ENCODE measurements at regions of chr12 and their contacts with region 1.

Region 1: DNA sequence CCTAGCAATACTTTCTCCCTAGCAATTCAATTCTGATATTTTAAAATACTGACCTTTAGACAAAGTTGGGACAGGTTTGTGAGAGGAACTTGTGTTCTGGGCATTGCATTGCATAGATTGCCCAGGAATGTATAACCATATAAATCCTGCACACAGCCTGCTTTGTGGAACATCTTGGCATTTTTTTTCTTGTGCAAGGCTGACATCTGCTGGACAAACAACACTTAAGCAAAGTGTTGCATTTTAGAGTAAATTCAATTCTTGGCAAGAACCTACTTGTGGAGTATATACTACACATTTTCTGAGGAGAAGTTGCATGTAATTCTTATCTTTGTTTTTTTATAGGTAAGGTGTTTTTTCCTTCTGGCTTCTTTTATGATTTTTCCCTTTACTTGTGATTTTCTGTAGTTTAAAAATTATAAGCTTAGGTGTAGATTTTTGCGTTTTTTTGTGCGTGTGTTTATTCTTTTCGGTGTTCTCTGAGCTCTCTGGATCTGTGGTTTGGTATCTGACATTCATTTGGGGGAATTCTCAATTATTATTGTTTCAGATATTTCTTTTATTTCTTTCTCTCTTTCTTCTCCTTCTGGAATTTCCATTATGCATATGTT is 26.4 kb downstream of the TESPA1 start:
- DNase-seq: peak; percentile 49
- H3K4me3 Mint-ChIP-seq: no peak overlapping the region
- H3K27ac Mint-ChIP-seq: no peak overlapping the region
- H3K4me1 Mint-ChIP-seq: peaks cover 73% of the 10 kb centered on the region
- H3K27me3 Mint-ChIP-seq: no peaks in the 10 kb centered on the region

Region 2: DNA sequence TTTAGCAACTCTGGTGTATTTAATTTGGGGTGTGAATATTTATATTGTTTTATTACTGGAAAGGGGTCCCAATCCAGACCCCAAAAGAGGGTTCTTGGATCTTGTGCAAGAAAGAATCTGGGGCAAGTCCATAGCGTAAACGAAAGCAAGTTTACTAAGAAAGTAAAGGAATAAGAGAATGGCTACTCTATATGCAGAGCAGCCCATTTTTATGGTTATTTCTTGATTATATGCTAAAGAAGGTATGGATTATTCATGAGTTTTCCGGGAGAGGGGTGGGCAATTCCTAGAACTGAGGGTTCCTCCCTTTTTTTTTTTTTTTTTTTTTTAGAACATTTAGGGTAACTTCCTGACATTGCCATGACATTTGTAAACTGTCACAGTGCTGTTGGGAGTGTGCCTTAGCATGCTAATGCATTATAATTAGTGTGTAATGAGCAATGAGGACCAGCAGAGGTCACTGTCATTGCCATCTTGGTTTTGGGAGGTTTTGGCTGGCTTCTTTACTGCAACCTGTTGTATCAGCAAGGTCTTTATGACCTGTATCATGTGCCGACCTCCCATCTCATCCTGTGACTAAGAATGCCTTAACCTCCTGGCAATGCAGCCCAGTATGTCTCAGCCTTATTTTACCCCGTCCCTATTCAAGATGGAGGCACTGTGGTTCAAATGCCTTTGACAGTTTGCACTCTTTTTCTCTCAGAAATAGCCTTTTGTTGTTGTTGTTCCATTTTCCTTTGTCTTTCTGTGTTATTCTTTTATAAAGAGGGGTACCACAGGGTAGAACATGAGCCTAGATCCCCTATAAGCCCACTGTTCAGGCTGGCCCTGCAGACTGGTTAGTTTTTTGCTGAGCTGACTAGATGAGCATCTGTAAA is 234.5 kb before region 1 on chr12:
- CTCF ChIA-PET with region 1: interaction called, 15 read pairs
- POLR2A ChIA-PET with region 1: no interaction called
- DNase-seq: peak; percentile 42
- H3K4me3 Mint-ChIP-seq: no peak overlapping the region
- H3K27ac Mint-ChIP-seq: no peak overlapping the region
- H3K4me1 Mint-ChIP-seq: peaks cover 9% of the 10 kb centered on the region
- H3K27me3 Mint-ChIP-seq: peaks cover 25% of the 10 kb centered on the region

Region 3: DNA sequence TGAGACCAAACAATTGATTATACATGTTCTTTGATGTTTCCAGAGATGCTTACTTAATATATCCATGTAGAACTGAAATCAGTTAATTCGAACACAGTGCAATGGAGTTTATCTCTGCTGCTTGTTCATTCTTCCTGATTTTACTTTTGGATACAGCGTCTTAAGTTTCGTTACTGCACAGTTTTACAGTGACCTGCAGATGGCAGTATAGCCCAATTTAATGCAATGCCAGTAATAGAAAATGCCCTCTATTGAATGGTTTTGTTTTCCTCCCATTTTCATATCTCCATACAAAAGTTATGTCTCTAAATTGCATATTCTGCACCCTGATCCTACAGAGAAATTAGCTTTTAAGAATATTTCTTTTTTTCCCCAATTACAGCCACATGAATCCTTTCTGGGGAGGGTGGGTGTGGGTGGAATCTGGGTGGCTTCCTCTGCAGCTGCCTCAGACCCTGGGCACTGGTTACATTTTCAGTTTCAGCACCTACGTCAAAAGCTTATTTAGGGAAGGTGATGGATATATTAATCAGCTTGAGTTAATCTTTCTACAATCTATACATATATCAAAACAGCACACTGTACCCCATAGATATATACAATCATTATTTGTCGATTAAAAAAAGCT is 208.8 kb before region 1 on chr12:
- CTCF ChIA-PET with region 1: interaction called, 73 read pairs
- POLR2A ChIA-PET with region 1: interaction called, 3 read pairs
- DNase-seq: peak; percentile 39
- H3K4me3 Mint-ChIP-seq: peak overlapping the region; percentile 36
- H3K27ac Mint-ChIP-seq: no peak overlapping the region
- H3K4me1 Mint-ChIP-seq: peaks cover 19% of the 10 kb centered on the region
- H3K27me3 Mint-ChIP-seq: no peaks in the 10 kb centered on the region

Region 4: GRCh38 chr12:54759751-54760150 is 198.4 kb before region 1 on chr12:
- CTCF ChIA-PET with region 1: interaction called, 17 read pairs
- POLR2A ChIA-PET with region 1: no interaction called
- DNase-seq: peak; percentile 24
- H3K4me3 Mint-ChIP-seq: no peak overlapping the region
- H3K27ac Mint-ChIP-seq: no peak overlapping the region
- H3K4me1 Mint-ChIP-seq: peaks cover 11% of the 10 kb centered on the region
- H3K27me3 Mint-ChIP-seq: peaks cover 6% of the 10 kb centered on the region

Region 5: DNA sequence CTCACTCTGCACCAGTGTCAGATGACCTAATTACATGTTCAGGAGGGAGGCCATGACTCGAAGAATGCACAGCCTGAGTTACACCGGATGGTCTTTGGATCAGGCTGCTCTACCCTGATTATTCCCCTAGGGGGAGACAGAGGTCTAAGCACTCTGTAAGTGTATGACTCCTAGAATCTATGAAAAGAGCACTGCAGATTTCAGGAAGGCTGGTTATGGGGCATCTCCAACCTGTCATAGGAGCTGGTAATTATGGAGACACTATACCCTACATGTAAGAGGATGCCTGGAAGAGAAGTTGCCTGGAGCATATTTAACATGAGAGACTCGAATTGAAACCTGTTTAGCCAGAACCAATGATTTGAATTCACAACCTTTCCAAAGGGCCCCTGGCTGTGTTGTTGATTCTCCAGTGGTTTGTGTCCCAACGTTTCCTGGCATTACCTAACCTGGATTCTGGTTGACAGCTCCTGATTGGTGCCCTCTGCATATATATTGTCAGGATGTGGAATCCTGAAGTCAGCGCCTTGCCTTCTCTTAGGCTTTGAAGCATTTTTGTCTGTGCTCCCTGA is 104.1 kb before region 1 on chr12 and contains the start of gene MUCL1:
- CTCF ChIA-PET with region 1: interaction called, 38 read pairs
- POLR2A ChIA-PET with region 1: interaction called, 7 read pairs
- DNase-seq: peak; percentile 76
- H3K4me3 Mint-ChIP-seq: no peak within 1 kb of the TSS
- H3K27ac Mint-ChIP-seq: no peak within 1 kb of the TSS
- H3K4me1 Mint-ChIP-seq: peaks cover 10% of the 10 kb centered on the region
- H3K27me3 Mint-ChIP-seq: peaks cover 7% of the 10 kb centered on the region
- total RNA-seq, gene MUCL1: not detected

Region 6: GRCh38 chr12:54977155-54977554 is 19.0 kb after region 1 on chr12:
- CTCF ChIA-PET with region 1: interaction called, 10 read pairs
- POLR2A ChIA-PET with region 1: interaction called, 24 read pairs
- DNase-seq: no peak
- H3K4me3 Mint-ChIP-seq: peak overlapping the region; percentile 79
- H3K27ac Mint-ChIP-seq: peak overlapping the region; percentile 13
- H3K4me1 Mint-ChIP-seq: peaks cover 90% of the 10 kb centered on the region
- H3K27me3 Mint-ChIP-seq: no peaks in the 10 kb centered on the region

Region 7: GRCh38 chr12:54984658-54985376 is 26.7 kb after region 1 on chr12 and contains the start of gene TESPA1:
- CTCF ChIA-PET with region 1: interaction called, 6 read pairs
- POLR2A ChIA-PET with region 1: interaction called, 24 read pairs
- DNase-seq: peak; percentile 91
- H3K4me3 Mint-ChIP-seq: peak within 1 kb of the TSS; percentile 79
- H3K27ac Mint-ChIP-seq: peak within 1 kb of the TSS; percentile 85
- H3K4me1 Mint-ChIP-seq: peaks cover 72% of the 10 kb centered on the region
- H3K27me3 Mint-ChIP-seq: no peaks in the 10 kb centered on the region
- total RNA-seq, gene TESPA1: 111 to 112 TPM

Measured in activated CD4-positive, alpha-beta memory T cell treated with anti-CD3 and anti-CD28 coated beads, Interleukin-2, amount 10 ng/mL, durations not matched to agents 7 days and 5 days (primary cell).